SK-N-SH (cell line): ENCODE measurements at regions of chr15 and their contacts with region 1.

Region 1: GRCh38 chr15:65832549-65833364 is 36.5 kb upstream of the RAB11A start:
- DNase-seq: peak; percentile 39
- H3K4me3 ChIP-seq: no peak overlapping the region
- H3K27ac ChIP-seq: peak overlapping the region; percentile 66 to 67
- H3K4me1 ChIP-seq: peaks cover 9 to 15% of the 10 kb centered on the region in 2 experiments; a peak in 3 of 4 replicates
- H3K27me3 ChIP-seq: no peaks in the 10 kb centered on the region
- CTCF ChIP-seq: peak; percentile 46
- EP300 ChIP-seq: no peak
- RAD21 ChIP-seq: peak; percentile 15; the same call in 1 of the 2 replicates

Region 2: DNA sequence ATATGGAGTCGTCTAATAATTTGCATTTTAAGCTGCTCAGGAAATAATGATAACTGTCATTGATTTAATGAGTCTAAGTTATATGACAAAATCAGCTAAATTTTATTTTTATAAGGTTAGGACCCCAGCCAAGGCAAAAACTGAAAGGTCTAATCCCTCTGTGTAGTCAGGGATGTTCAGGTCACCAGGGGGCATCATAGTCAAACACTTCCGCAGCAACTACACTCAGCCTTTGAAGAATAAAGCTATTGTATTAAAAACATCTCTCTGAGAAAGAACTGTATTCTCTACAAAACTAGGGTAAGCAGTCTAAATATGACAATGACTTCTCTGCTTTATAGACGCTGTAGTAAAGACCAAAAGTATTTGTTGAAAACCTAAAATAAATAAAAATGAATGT is 236.8 kb before region 1 on chr15:
- CTCF ChIA-PET with region 1: interaction called, 14 read pairs
- POLR2A ChIA-PET with region 1: no interaction called
- DNase-seq: peak; percentile 59
- H3K4me3 ChIP-seq: no peak overlapping the region
- H3K27ac ChIP-seq: no peak overlapping the region
- H3K4me1 ChIP-seq: no peaks in the 10 kb centered on the region
- H3K27me3 ChIP-seq: no peaks in the 10 kb centered on the region
- CTCF ChIP-seq: peak; percentile 59
- EP300 ChIP-seq: no peak
- RAD21 ChIP-seq: peak; percentile 67

Region 3: DNA sequence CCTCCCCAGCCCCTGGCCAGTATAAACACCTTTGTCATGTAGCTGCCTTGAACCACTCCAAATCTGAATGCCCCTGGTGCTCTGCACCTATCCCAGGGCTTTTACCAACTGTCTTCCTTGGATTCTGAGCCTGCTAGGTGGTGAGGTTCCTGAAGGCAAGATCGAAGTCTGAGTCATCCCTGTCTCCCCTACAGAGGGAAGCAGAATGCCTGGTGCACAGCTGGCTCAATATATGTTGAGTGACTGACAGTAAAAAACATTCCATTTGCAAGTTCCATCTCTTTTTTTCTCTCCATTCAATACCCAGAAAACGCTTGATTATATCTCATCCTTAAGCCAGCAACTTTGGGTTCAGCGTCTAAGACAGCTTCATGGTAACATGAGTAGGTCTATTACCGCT is 186.3 kb before region 1 on chr15:
- CTCF ChIA-PET with region 1: interaction called, 51 read pairs
- POLR2A ChIA-PET with region 1: no interaction called
- DNase-seq: no peak
- H3K4me3 ChIP-seq: no peak overlapping the region
- H3K27ac ChIP-seq: no peak overlapping the region
- H3K4me1 ChIP-seq: peaks cover 0 to 3% of the 10 kb centered on the region in 2 experiments; a peak in 1 of 4 replicates
- H3K27me3 ChIP-seq: no peaks in the 10 kb centered on the region
- CTCF ChIP-seq: no peak
- EP300 ChIP-seq: no peak
- RAD21 ChIP-seq: no peak

Region 4: DNA sequence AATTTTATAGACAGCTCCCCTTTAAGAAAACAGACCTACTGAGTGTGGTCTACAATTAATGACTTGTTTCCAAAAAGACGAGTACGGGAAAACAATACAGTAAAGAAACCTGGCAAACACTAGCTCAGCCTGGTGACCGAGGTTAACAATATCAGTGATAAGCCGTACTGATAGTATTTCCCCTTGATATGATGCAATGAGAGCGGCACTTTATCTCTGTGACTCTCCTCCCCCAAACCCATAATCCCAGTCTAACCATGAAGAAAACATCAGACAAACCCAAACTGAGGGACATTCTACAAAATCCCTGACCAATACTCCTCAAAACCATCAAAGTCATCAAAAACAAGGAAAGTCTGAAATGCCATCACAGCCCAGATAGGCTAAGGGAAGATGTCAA is 48.9 kb before region 1 on chr15:
- CTCF ChIA-PET with region 1: no interaction called
- POLR2A ChIA-PET with region 1: no interaction called
- DNase-seq: no peak
- H3K4me3 ChIP-seq: no peak overlapping the region
- H3K27ac ChIP-seq: no peak overlapping the region
- H3K4me1 ChIP-seq: peaks cover 0 to 3% of the 10 kb centered on the region in 2 experiments; a peak in 1 of 4 replicates
- H3K27me3 ChIP-seq: no peaks in the 10 kb centered on the region
- CTCF ChIP-seq: no peak
- EP300 ChIP-seq: no peak
- RAD21 ChIP-seq: no peak

Region 5: DNA sequence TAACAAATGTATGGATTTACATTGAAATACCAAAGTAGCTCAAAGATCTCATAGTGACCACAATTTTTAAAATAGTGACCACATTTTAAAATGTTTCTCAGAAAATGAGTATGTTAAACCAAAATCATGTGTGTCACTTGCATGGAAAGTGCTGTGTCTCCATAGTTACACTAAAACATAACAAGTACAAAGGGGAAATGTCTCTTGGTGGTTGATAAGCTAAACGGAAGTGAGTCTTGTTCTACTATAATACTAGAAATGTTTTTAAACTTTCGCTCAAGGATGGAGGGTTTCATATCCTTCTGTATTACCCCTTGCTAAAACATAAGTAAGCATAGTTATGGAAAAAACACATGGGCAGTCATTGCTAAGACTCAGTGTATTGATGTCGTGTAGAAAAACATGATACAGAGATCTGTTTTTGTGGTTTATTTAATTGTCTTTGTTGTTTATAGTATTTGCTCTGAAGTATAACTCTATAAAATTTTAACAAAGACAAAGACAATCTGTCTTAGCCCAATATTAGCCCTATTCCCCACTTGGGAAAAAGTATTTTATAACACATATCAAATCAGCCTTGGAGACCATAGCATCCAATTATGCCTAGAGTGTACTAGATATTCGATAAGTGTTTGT is 13.7 kb before region 1 on chr15:
- CTCF ChIA-PET with region 1: interaction called, 11 read pairs
- POLR2A ChIA-PET with region 1: no interaction called
- DNase-seq: no peak
- H3K4me3 ChIP-seq: no peak overlapping the region
- H3K27ac ChIP-seq: no peak overlapping the region
- H3K4me1 ChIP-seq: no peaks in the 10 kb centered on the region; a peak in 1 of 4 replicates
- H3K27me3 ChIP-seq: no peaks in the 10 kb centered on the region
- CTCF ChIP-seq: no peak
- EP300 ChIP-seq: no peak
- RAD21 ChIP-seq: no peak